AG04450 (cell line): ENCODE measurements at regions of chr16 and their contacts with region 1.

Region 1: GRCh38 chr16:88737298-88738150 is 31.2 kb downstream of the CTU2 start:
- DNase-seq: peak; percentile 29
- H3K4me3 ChIP-seq: no peak overlapping the region
- H3K27ac ChIP-seq: peak overlapping the region; percentile 21
- H3K27me3 ChIP-seq: no peaks in the 10 kb centered on the region
- CTCF ChIP-seq: peak; percentile 73

Region 2: DNA sequence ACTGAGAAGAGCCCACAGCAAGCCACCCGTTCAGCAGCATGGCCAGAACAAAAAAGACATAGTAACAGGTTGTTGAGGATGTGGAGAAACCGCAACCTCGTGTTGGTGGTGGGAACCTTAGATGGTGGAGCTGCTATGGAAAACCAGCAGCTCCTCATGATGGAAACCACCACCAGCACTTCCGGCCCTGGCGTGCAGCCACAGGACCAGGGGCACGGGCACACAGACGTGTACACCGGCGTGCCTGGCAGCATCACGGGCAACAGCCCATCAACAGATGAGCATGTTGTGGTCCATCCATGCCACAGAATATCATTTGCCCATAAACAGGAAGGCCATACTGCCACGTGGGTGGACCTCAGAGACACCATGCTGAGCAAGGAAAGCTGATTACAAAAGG is 19.3 kb before region 1 on chr16:
- CTCF ChIA-PET with region 1: interaction called, 10 read pairs
- POLR2A ChIA-PET with region 1: interaction called, 3 read pairs
- DNase-seq: no peak
- H3K4me3 ChIP-seq: no peak overlapping the region
- H3K27ac ChIP-seq: no peak overlapping the region
- H3K27me3 ChIP-seq: no peaks in the 10 kb centered on the region
- CTCF ChIP-seq: no peak

Region 3: GRCh38 chr16:88754912-88755744 is 17.6 kb after region 1 on chr16:
- CTCF ChIA-PET with region 1: interaction called, 14 read pairs
- POLR2A ChIA-PET with region 1: no interaction called
- DNase-seq: peak; percentile 60
- H3K4me3 ChIP-seq: no peak overlapping the region
- H3K27ac ChIP-seq: peak overlapping the region; percentile 70
- H3K27me3 ChIP-seq: no peaks in the 10 kb centered on the region
- CTCF ChIP-seq: peak; percentile 18; the same call in 1 of the 2 replicates

Region 4: GRCh38 chr16:88779406-88780141 is 42.0 kb after region 1 on chr16:
- CTCF ChIA-PET with region 1: interaction called, 19 read pairs
- POLR2A ChIA-PET with region 1: interaction called, 5 read pairs
- DNase-seq: no peak
- H3K4me3 ChIP-seq: no peak overlapping the region
- H3K27ac ChIP-seq: no peak overlapping the region
- H3K27me3 ChIP-seq: no peaks in the 10 kb centered on the region
- CTCF ChIP-seq: no peak

Region 5: GRCh38 chr16:88790312-88791211 is 53.0 kb after region 1 on chr16:
- CTCF ChIA-PET with region 1: interaction called, 13 read pairs
- POLR2A ChIA-PET with region 1: no interaction called
- DNase-seq: no peak
- H3K4me3 ChIP-seq: no peak overlapping the region
- H3K27ac ChIP-seq: no peak overlapping the region
- H3K27me3 ChIP-seq: no peaks in the 10 kb centered on the region
- CTCF ChIP-seq: no peak

Region 6: GRCh38 chr16:88928405-88929088 is 191.0 kb after region 1 on chr16:
- CTCF ChIA-PET with region 1: no interaction called
- POLR2A ChIA-PET with region 1: no interaction called
- DNase-seq: no peak
- H3K4me3 ChIP-seq: no peak overlapping the region
- H3K27ac ChIP-seq: no peak overlapping the region
- H3K27me3 ChIP-seq: peaks cover 20% of the 10 kb centered on the region
- CTCF ChIP-seq: no peak

Region 7: GRCh38 chr16:89167425-89167941 is 430.0 kb after region 1 on chr16:
- CTCF ChIA-PET with region 1: interaction called, 12 read pairs
- POLR2A ChIA-PET with region 1: no interaction called
- DNase-seq: peak; percentile 34
- H3K4me3 ChIP-seq: no peak overlapping the region
- H3K27ac ChIP-seq: no peak overlapping the region
- H3K27me3 ChIP-seq: peaks cover 55% of the 10 kb centered on the region
- CTCF ChIP-seq: peak; percentile 87